IMR-90 (cell line): ENCODE measurements at regions of chr14 and their contacts with region 1.

Region 1: GRCh38 chr14:30375296-30375892 is 183.6 kb upstream of the G2E3 start:
- DNase-seq: peak; percentile 47
- ATAC-seq: peak; percentile 97
- H3K4me3 ChIP-seq: no peak overlapping the region
- H3K27ac ChIP-seq: no peak overlapping the region
- H3K4me1 ChIP-seq: no peaks in the 10 kb centered on the region
- H3K27me3 ChIP-seq: no peaks in the 10 kb centered on the region; the same call in 1 of the 2 replicates
- CTCF ChIP-seq: peak; percentile 71
- POLR2A ChIP-seq: no peak
- RAD21 ChIP-seq: peak; percentile 58

Region 2: GRCh38 chr14:30443368-30444007 is 68.1 kb after region 1 on chr14:
- CTCF ChIA-PET with region 1: interaction called, 4 read pairs
- POLR2A ChIA-PET with region 1: no interaction called
- dilution Hi-C with region 1: no loop called
- in situ Hi-C with region 1: no loop called
- intact Hi-C with region 1: loop called (anchors 1 kb)
- DNase-seq: peak; percentile 46
- ATAC-seq: peak; percentile 68
- H3K4me3 ChIP-seq: no peak overlapping the region
- H3K27ac ChIP-seq: no peak overlapping the region
- H3K4me1 ChIP-seq: no peaks in the 10 kb centered on the region
- H3K27me3 ChIP-seq: peaks cover 6% of the 10 kb centered on the region
- CTCF ChIP-seq: peak; percentile 56
- POLR2A ChIP-seq: no peak
- RAD21 ChIP-seq: peak; percentile 71

Region 3: GRCh38 chr14:30521899-30522736 is 146.7 kb after region 1 on chr14:
- CTCF ChIA-PET with region 1: interaction called, 5 read pairs
- POLR2A ChIA-PET with region 1: no interaction called
- dilution Hi-C with region 1: no loop called
- in situ Hi-C with region 1: no loop called
- intact Hi-C with region 1: loop called (anchors 2 kb)
- DNase-seq: peak; percentile 51
- ATAC-seq: peak; percentile 85
- H3K4me3 ChIP-seq: no peak overlapping the region
- H3K27ac ChIP-seq: no peak overlapping the region
- H3K4me1 ChIP-seq: no peaks in the 10 kb centered on the region
- H3K27me3 ChIP-seq: no peaks in the 10 kb centered on the region; the same call in 1 of the 2 replicates
- CTCF ChIP-seq: peak; percentile 64
- POLR2A ChIP-seq: no peak
- RAD21 ChIP-seq: peak; percentile 44